Psoas muscle (tissue), 8 donors: ENCODE measurements at regions of chr10 and their contacts with region 1.

Region 1: GRCh38 chr10:95363303-95363912 is 72.6 kb upstream of the PDLIM1 start:
- DNase-seq: no peak
- ATAC-seq: peak in 3 of 4 donors; percentile 54 to 66 (median 59)
- H3K4me3 ChIP-seq: no peak overlapping the region
- H3K27ac ChIP-seq: no peak overlapping the region
- H3K4me1 ChIP-seq: peaks cover 6% of the 10 kb centered on the region
- H3K27me3 ChIP-seq: no peaks in the 10 kb centered on the region
- CTCF ChIP-seq: peak; percentile 96

Region 2: GRCh38 chr10:95193944-95194343 is 169.5 kb before region 1 on chr10 and contains the start of gene ACSM6:
- intact Hi-C with region 1: loop called in 1 of 2 experiments (anchors 5 kb)
- DNase-seq: no peak
- ATAC-seq: no peak
- H3K4me3 ChIP-seq: no peak within 1 kb of the TSS
- H3K27ac ChIP-seq: no peak within 1 kb of the TSS
- H3K4me1 ChIP-seq: no peaks in the 10 kb centered on the region
- H3K27me3 ChIP-seq: no peaks in the 10 kb centered on the region
- CTCF ChIP-seq: no peak
- total RNA-seq, gene ACSM6: not detected

Region 3: GRCh38 chr10:95864906-95865813 is 501.8 kb after region 1 on chr10:
- intact Hi-C with region 1: loop called in 1 of 2 experiments (anchors 10 kb)
- DNase-seq: no peak
- ATAC-seq: peak in 3 of 4 donors; percentile 56 to 74 (median 66)
- H3K4me3 ChIP-seq: no peak overlapping the region
- H3K27ac ChIP-seq: no peak overlapping the region
- H3K4me1 ChIP-seq: no peaks in the 10 kb centered on the region
- H3K27me3 ChIP-seq: no peaks in the 10 kb centered on the region
- CTCF ChIP-seq: peak; percentile 48